Vagina (tissue), 2 donors: ENCODE measurements at regions of chr12 and their contacts with region 1.

Region 1: GRCh38 chr12:68416826-68417225 is 84.7 kb upstream of the MDM1 start:
- DNase-seq: no peak
- H3K4me3 ChIP-seq: no peak overlapping the region
- H3K27ac ChIP-seq: no peak overlapping the region
- H3K4me1 ChIP-seq: peaks cover 15% of the 10 kb centered on the region
- H3K27me3 ChIP-seq: no peaks in the 10 kb centered on the region
- CTCF ChIP-seq: no peak
- POLR2A ChIP-seq: no peak

Region 2: GRCh38 chr12:69972140-69972539 is 1555.3 kb after region 1 on chr12:
- intact Hi-C with region 1: loop called (anchors 5 kb)
- DNase-seq: no peak
- H3K4me3 ChIP-seq: no peak overlapping the region
- H3K27ac ChIP-seq: peak overlapping the region; percentile 27
- H3K4me1 ChIP-seq: peaks cover 6% of the 10 kb centered on the region
- H3K27me3 ChIP-seq: no peaks in the 10 kb centered on the region
- CTCF ChIP-seq: no peak
- POLR2A ChIP-seq: no peak